Activated CD8-positive, alpha-beta memory T cell treated with anti-CD3 and anti-CD28 coated beads, Interleukin-2, amount 10 ng/mL, durations not matched to agents 7 days and 5 days (primary cell): ENCODE measurements at regions of chr19 and their contacts with region 1.

Region 1: GRCh38 chr19:48999481-49000325 is 6.0 kb downstream of the RUVBL2 start:
- DNase-seq: peak; percentile 81
- ATAC-seq: peak; percentile 84
- H3K4me3 Mint-ChIP-seq: no peak overlapping the region
- H3K27ac Mint-ChIP-seq: no peak overlapping the region
- H3K4me1 Mint-ChIP-seq: peaks cover 25% of the 10 kb centered on the region
- H3K27me3 Mint-ChIP-seq: no peaks in the 10 kb centered on the region

Region 2: GRCh38 chr19:48918801-48919247 is 80.9 kb before region 1 on chr19:
- CTCF ChIA-PET with region 1: no interaction called
- DNase-seq: peak; percentile 45
- ATAC-seq: peak; percentile 47
- H3K4me3 Mint-ChIP-seq: no peak overlapping the region
- H3K27ac Mint-ChIP-seq: no peak overlapping the region
- H3K4me1 Mint-ChIP-seq: peaks cover 2% of the 10 kb centered on the region
- H3K27me3 Mint-ChIP-seq: no peaks in the 10 kb centered on the region

Region 3: DNA sequence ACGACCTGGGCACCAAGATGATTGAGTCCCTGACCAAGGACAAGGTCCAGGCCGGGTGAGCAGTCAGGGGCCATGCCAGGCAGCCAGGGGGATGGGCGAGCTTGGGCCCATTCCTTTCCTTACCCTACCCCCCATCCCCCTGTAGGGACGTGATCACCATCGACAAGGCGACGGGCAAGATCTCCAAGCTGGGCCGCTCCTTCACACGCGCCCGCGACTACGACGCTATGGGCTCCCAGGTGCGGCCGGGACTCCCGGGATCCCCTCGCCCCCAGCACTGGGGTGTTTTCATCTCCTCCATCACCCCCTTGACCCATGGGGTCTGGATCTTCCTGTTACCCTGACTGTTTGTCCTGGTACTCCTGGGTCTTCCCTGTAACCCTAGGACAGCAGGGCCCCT is 10.1 kb after region 1 on chr19:
- CTCF ChIA-PET with region 1: interaction called, 25 read pairs
- DNase-seq: no peak
- ATAC-seq: no peak
- H3K4me3 Mint-ChIP-seq: no peak overlapping the region
- H3K27ac Mint-ChIP-seq: no peak overlapping the region
- H3K4me1 Mint-ChIP-seq: no peaks in the 10 kb centered on the region
- H3K27me3 Mint-ChIP-seq: no peaks in the 10 kb centered on the region

Region 4: DNA sequence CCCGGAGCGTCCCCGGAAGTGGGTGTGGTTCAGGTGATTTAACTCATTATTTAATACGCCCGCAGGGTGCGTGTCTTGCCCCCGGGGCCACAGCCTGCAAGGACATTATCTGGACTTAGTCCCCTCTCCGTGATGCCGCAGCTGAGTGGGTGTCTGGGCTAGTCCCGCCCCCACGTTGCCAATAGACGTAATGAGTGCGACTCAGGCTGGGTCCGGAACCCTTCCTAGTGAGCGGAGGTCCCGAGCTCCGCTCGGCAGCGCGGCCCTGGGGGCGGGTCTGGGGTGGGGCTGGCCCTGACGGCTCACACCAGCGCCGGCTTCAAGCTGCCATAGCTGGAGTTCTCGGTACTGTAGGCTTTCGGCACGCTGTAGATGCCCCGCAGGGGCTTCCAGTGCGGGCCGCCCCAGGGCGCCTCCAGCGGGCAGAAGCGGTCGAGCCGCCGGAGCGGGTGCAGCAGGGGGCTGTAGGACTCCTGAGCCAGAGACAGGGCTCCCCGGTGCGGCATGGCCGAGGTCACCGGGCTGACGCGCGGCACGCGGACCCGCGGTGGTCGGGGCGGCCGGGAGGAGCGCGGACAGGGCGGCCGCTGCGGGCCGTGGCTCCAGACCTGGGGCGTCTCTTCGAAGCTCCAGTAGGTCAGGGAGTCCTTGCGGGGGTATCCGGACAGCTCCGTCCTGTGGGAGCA is 18.1 kb after region 1 on chr19:
- CTCF ChIA-PET with region 1: interaction called, 47 read pairs
- DNase-seq: peak; percentile 79
- ATAC-seq: peak; percentile 87
- H3K4me3 Mint-ChIP-seq: peak overlapping the region; percentile 65
- H3K27ac Mint-ChIP-seq: no peak overlapping the region
- H3K4me1 Mint-ChIP-seq: peaks cover 34% of the 10 kb centered on the region
- H3K27me3 Mint-ChIP-seq: peaks cover 14% of the 10 kb centered on the region

Region 5: GRCh38 chr19:49073514-49074378 is 74.0 kb after region 1 on chr19:
- CTCF ChIA-PET with region 1: interaction called, 10 read pairs
- DNase-seq: no peak
- ATAC-seq: no peak
- H3K4me3 Mint-ChIP-seq: no peak overlapping the region
- H3K27ac Mint-ChIP-seq: no peak overlapping the region
- H3K4me1 Mint-ChIP-seq: peaks cover 10% of the 10 kb centered on the region
- H3K27me3 Mint-ChIP-seq: peaks cover 46% of the 10 kb centered on the region

Region 6: GRCh38 chr19:49188626-49189200 is 189.0 kb after region 1 on chr19:
- CTCF ChIA-PET with region 1: no interaction called
- DNase-seq: no peak
- ATAC-seq: no peak
- H3K4me3 Mint-ChIP-seq: no peak overlapping the region
- H3K27ac Mint-ChIP-seq: no peak overlapping the region
- H3K4me1 Mint-ChIP-seq: peaks cover 13% of the 10 kb centered on the region
- H3K27me3 Mint-ChIP-seq: peaks cover 6% of the 10 kb centered on the region

Region 7: GRCh38 chr19:49200238-49200862 is 200.6 kb after region 1 on chr19:
- CTCF ChIA-PET with region 1: interaction called, 13 read pairs
- DNase-seq: no peak
- ATAC-seq: no peak
- H3K4me3 Mint-ChIP-seq: no peak overlapping the region
- H3K27ac Mint-ChIP-seq: no peak overlapping the region
- H3K4me1 Mint-ChIP-seq: peaks cover 6% of the 10 kb centered on the region
- H3K27me3 Mint-ChIP-seq: peaks cover 7% of the 10 kb centered on the region